ENCODE measurements at regions of chr7 and their contacts with region 1.

Region 1: GRCh38 chr7:154953006-154953684 is 49.8 kb downstream of the PAXIP1 start:
- DNase-seq: peak; percentile 79

Region 2: DNA sequence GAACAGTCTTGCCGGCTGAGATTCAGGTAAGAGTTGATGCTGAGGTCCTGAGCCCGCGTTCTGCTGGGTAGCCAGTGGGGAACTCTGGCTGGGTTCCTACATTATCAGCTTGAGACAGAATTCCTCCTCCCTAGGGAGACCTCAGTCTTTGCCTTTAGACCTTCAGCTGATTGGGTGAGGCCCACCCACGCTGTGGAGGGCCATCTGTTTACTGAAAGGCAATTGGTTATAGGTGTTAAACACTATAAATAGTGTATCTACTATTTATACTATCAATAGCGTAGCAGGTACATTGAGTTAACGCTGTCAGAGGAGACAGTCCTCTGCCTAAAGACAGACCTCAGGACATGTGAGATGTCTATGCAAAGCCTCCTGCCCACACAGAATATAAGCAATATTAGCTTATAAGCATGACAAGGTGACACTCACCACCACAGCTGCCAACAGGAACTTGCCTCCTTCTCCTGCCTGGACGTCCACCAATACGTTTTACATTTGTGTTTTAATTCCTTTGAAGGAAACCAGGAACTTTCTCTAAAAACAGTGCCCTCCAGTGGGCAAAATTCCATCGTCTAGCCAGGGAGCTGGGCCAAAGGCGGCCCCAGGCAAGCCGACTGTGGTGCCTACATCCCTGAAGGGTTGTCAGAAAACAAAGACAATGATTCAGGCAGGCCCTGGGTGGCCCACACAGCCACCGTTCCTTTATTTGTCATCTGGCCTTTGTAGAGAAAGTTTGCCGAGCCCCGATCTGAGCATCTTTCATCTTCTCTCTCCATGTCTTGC is 403.4 kb after region 1 on chr7:
- in situ Hi-C with region 1: loop called (anchors 10 kb)
- DNase-seq: peak; percentile 68

Measured in SK-MEL-5 (cell line).